GM23248 (cell line): ENCODE measurements at regions of chr1 and their contacts with region 1.

Region 1: DNA sequence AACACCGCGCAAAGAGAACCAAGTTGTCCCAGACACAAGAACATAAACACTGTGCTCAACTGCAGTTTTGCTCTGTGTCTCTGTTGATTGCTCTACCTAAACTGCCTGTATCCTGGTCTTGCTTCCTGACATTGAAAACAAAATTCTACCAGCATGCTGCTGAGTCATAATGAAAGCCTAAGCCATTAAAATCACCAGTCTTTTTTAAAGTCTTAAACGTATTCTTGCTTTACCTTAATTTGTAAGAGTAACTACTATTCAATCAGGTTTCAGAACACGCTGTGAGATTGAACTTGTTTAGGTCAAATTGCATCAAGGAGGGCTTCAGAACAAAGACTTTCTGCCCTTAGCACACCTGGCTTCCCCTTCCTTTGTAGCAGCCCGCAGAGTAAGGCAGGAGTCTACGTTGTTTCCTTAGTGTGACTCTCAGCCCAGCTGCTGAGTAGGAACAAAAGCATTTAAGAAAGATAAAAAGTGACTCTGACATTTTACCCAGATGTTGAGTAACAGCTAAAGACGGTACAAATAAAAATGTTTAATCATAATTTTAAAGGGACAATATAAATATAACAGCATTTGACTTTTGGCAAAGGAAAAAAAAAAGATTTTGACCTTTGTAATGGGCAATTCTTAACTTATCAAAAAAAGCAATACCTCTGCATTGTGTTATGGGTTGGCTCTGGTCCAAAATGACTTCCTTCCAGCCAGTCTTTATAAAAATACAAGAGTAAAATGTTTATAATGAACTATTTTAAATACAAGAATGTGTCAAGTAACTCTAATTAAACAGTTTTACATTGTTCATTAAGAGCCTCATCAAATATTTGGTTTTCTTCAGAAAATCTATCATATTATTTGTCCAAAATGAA is 186.9 kb upstream of the ADGRL4 start:
- DNase-seq: peak; percentile 81
- H3K4me3 ChIP-seq: peak overlapping the region; percentile 18; the same call in 1 of the 2 replicates
- H3K27ac ChIP-seq: peak overlapping the region; percentile 59
- H3K4me1 ChIP-seq: peaks cover 18% of the 10 kb centered on the region
- H3K27me3 ChIP-seq: no peaks in the 10 kb centered on the region

Region 2: GRCh38 chr1:78385744-78386462 is 807.5 kb before region 1 on chr1:
- in situ Hi-C with region 1: no loop called
- DNase-seq: no peak
- H3K4me3 ChIP-seq: no peak overlapping the region
- H3K27ac ChIP-seq: no peak overlapping the region
- H3K4me1 ChIP-seq: no peaks in the 10 kb centered on the region
- H3K27me3 ChIP-seq: no peaks in the 10 kb centered on the region

Region 3: DNA sequence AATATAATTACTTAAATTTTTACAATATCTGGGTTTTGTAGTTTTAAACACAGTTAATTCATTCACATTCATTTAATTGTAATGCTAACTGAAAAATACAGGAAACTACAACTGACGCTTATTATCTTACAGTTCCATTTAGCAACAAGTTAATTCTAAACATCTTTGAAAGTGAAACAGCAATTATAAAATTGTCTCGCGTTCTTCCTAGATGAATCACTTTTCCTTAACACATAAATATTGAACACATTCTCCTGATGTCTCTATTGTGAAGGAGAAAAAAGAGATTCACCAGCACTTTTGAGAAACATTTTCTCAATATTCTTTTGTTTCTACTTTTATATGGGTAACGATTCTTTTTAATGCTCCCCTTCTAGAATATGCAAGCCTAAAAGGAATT is 696.2 kb before region 1 on chr1:
- in situ Hi-C with region 1: no loop called
- DNase-seq: peak; percentile 50
- H3K4me3 ChIP-seq: peak overlapping the region; percentile 53
- H3K27ac ChIP-seq: no peak overlapping the region
- H3K4me1 ChIP-seq: peaks cover 34% of the 10 kb centered on the region
- H3K27me3 ChIP-seq: no peaks in the 10 kb centered on the region

Region 4: DNA sequence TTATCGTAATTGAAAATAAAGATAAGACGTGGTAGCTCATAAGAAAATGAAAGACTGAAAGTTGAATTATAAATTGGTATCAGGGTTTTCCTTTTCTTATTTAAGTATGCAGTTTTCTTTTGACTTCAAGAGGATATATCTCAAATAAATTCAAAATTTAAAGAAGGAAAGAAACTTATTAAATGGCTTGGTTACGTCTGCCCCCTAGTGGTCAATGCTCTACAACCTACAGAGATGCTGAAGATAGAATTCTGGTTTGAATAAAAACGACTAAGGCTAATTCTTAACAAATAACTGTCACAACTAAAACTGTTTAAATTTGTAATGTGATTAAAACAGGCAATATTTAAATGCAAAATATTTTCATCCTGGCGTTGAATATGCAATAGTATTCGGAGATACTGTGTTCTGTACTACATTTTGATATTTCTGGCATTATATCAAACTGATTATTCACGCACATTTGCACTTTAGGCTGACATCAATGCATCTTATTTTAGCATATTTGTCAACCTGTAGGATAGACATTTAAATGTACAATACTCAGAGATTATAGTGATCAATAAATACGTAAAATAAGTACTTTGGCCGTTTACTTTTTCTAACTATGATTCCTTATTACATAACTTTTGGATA is 517.0 kb before region 1 on chr1:
- in situ Hi-C with region 1: loop called (anchors 25 kb)
- DNase-seq: peak; percentile 76
- H3K4me3 ChIP-seq: no peak overlapping the region
- H3K27ac ChIP-seq: no peak overlapping the region
- H3K4me1 ChIP-seq: no peaks in the 10 kb centered on the region
- H3K27me3 ChIP-seq: no peaks in the 10 kb centered on the region

Region 5: GRCh38 chr1:78839704-78840277 is 353.7 kb before region 1 on chr1:
- in situ Hi-C with region 1: loop called (anchors 10 kb)
- DNase-seq: peak; percentile 53
- H3K4me3 ChIP-seq: no peak overlapping the region
- H3K27ac ChIP-seq: no peak overlapping the region
- H3K4me1 ChIP-seq: peaks cover 52% of the 10 kb centered on the region
- H3K27me3 ChIP-seq: no peaks in the 10 kb centered on the region

Region 6: DNA sequence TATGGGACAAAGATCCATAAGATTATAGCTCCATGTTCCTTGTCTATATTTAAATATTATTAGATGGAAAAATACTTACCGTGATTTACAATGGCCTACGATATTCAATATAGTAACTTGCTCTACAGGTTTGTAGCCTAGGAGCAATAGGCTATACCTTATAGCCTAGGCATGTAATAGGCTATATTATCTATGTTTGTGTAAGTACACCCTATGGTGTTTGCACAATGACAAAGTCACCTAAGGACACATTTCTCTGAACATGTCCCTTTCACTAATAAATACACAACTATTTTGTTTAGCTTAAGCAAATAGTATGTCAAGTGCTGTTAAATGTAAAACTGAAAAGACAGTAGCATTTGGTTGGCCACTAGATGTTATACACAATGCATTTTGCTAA is 62.0 kb after region 1 on chr1:
- in situ Hi-C with region 1: no loop called
- DNase-seq: no peak
- H3K4me3 ChIP-seq: no peak overlapping the region
- H3K27ac ChIP-seq: no peak overlapping the region
- H3K4me1 ChIP-seq: peaks cover 4% of the 10 kb centered on the region
- H3K27me3 ChIP-seq: no peaks in the 10 kb centered on the region

Region 7: DNA sequence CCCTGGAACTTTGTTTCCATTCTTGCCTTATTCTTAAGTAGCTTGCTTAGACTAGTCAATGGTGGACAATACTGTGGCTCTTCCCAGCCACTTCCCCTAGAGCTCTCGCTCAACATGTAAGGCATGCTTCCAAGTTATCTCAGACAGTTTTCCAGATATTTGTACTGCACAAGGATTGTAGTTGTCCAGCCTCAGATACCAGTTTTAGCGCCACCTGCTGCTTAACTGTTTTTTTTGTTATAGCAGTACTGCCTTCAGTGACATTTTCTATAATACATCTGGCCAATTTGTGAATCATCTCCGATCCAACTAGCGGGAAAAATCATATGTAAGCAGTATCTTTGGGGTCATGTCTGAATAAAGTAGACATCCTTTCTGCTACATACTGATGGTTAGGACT is 159.8 kb after region 1 on chr1:
- in situ Hi-C with region 1: no loop called
- DNase-seq: peak; percentile 73
- H3K4me3 ChIP-seq: no peak overlapping the region
- H3K27ac ChIP-seq: no peak overlapping the region
- H3K4me1 ChIP-seq: peaks cover 11% of the 10 kb centered on the region
- H3K27me3 ChIP-seq: no peaks in the 10 kb centered on the region